B cell (primary cell): ENCODE measurements at regions of chr6 and their contacts with region 1.

Region 1: GRCh38 chr6:44221291-44221960 is 2.0 kb upstream of the SLC29A1 start:
- DNase-seq: peak; percentile 81
- ATAC-seq: peak; percentile 40
- H3K4me3 ChIP-seq: no peak overlapping the region
- H3K4me3 Mint-ChIP-seq: peak overlapping the region; percentile 58
- H3K27ac ChIP-seq: no peak overlapping the region
- H3K27ac Mint-ChIP-seq: peak overlapping the region; percentile 13
- H3K4me1 ChIP-seq: peaks cover 26 to 45% of the 10 kb centered on the region in 2 donors
- H3K4me1 Mint-ChIP-seq: peaks cover 41% of the 10 kb centered on the region
- H3K27me3 ChIP-seq: peaks cover 0 to 2% (median 0%) of the 10 kb centered on the region in 4 experiments
- H3K27me3 Mint-ChIP-seq: no peaks in the 10 kb centered on the region
- CTCF ChIP-seq: peak; percentile 80

Region 2: GRCh38 chr6:43865932-43866645 is 355.3 kb before region 1 on chr6:
- CTCF ChIA-PET with region 1: no interaction called
- POLR2A ChIA-PET with region 1: no interaction called
- intact Hi-C with region 1: no loop called
- DNase-seq: no peak
- ATAC-seq: no peak
- H3K4me3 ChIP-seq: no peak overlapping the region
- H3K4me3 Mint-ChIP-seq: no peak overlapping the region
- H3K27ac ChIP-seq: no peak overlapping the region
- H3K27ac Mint-ChIP-seq: no peak overlapping the region
- H3K4me1 ChIP-seq: no peaks in the 10 kb centered on the region
- H3K4me1 Mint-ChIP-seq: no peaks in the 10 kb centered on the region
- H3K27me3 ChIP-seq: peaks cover 0 to 13% (median 2%) of the 10 kb centered on the region in 4 experiments
- H3K27me3 Mint-ChIP-seq: peaks cover 29% of the 10 kb centered on the region
- CTCF ChIP-seq: no peak

Region 3: GRCh38 chr6:44172731-44173500 is 48.5 kb before region 1 on chr6:
- CTCF ChIA-PET with region 1: interaction called, 6 read pairs
- POLR2A ChIA-PET with region 1: interaction called, 4 read pairs
- intact Hi-C with region 1: loop called (anchors 5 kb)
- DNase-seq: peak; percentile 83
- ATAC-seq: peak; percentile 72
- H3K4me3 ChIP-seq: no peak overlapping the region
- H3K4me3 Mint-ChIP-seq: no peak overlapping the region
- H3K27ac ChIP-seq: no peak overlapping the region
- H3K27ac Mint-ChIP-seq: no peak overlapping the region
- H3K4me1 ChIP-seq: peaks cover 10 to 18% of the 10 kb centered on the region in 2 donors
- H3K4me1 Mint-ChIP-seq: peaks cover 14% of the 10 kb centered on the region
- H3K27me3 ChIP-seq: peaks cover 0 to 18% (median under 1%) of the 10 kb centered on the region in 4 experiments
- H3K27me3 Mint-ChIP-seq: peaks cover 17% of the 10 kb centered on the region
- CTCF ChIP-seq: peak; percentile 83

Region 4: GRCh38 chr6:44246663-44247337 is 25.4 kb after region 1 on chr6 and contains the start of gene HSP90AB1:
- CTCF ChIA-PET with region 1: interaction called, 10 read pairs
- POLR2A ChIA-PET with region 1: interaction called, 52 read pairs
- intact Hi-C with region 1: loop called (anchors 1 kb)
- DNase-seq: peak; percentile 99
- ATAC-seq: peak; percentile 74
- H3K4me3 ChIP-seq: peak within 1 kb of the TSS; percentile 85 to 100 (median 98)
- H3K4me3 Mint-ChIP-seq: peak within 1 kb of the TSS; percentile 96
- H3K27ac ChIP-seq: peak within 1 kb of the TSS; percentile 93 to 99
- H3K27ac Mint-ChIP-seq: peak within 1 kb of the TSS; percentile 95
- H3K4me1 ChIP-seq: peaks cover 12 to 30% of the 10 kb centered on the region in 2 donors
- H3K4me1 Mint-ChIP-seq: peaks cover 43% of the 10 kb centered on the region
- H3K27me3 ChIP-seq: no peaks in the 10 kb centered on the region
- H3K27me3 Mint-ChIP-seq: no peaks in the 10 kb centered on the region
- CTCF ChIP-seq: no peak
- total RNA-seq, gene HSP90AB1: 384 and 395 TPM in 2 replicates

Region 5: DNA sequence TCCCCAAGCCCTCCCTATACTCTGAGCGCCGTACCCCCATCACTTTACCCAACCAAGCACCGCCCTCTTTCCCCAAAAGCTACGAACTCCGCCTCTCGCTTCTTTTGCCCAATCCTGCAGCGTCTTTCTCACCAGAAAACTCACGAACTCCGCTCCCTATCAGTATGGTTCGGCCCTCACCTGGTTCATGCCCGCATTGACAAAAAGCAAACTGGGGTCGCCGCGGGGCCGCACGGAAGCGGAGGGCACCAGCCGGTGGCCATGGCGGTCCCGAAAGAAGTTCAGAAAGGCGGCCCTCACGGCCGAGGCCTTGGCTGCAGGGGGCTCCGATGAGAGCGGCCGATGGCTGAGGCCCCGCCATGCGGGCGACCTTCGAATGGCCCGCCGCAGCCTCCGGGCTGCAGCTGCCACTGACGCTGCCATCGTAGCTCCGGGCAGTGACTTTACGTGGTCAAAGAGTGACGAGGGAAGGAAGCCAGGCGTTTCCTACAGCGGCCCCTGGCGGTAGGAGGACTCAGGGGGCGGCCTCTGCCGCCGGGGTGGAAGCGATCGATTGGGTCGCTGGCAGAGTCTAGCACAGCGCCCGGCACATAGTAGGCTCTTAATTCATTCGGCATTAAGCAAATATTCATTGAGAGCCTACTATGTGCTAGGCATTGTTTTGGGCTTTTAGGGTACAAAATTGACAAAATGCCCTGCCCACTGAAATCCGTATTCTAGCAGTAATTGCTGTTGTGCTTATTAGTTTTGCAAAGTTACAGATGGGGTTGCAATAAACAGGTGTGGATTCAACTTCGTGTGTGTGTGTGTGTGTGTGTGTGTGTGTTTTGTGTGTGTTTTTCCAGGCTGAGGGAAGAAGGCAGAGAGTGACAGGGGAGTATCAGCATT is 91.7 kb after region 1 on chr6 and contains the start of gene AARS2:
- CTCF ChIA-PET with region 1: interaction called, 3 read pairs
- POLR2A ChIA-PET with region 1: no interaction called
- intact Hi-C with region 1: loop called (anchors 2 kb)
- DNase-seq: peak; percentile 93
- ATAC-seq: peak; percentile 97
- H3K4me3 ChIP-seq: peak within 1 kb of the TSS; percentile 76 to 94 (median 88)
- H3K4me3 Mint-ChIP-seq: peak within 1 kb of the TSS; percentile 94
- H3K27ac ChIP-seq: peak within 1 kb of the TSS; percentile 72 to 86
- H3K27ac Mint-ChIP-seq: peak within 1 kb of the TSS; percentile 92
- H3K4me1 ChIP-seq: peaks cover 7 to 9% of the 10 kb centered on the region in 2 donors
- H3K4me1 Mint-ChIP-seq: peaks cover 17% of the 10 kb centered on the region
- H3K27me3 ChIP-seq: peaks cover 0 to 4% (median under 1%) of the 10 kb centered on the region in 4 experiments
- H3K27me3 Mint-ChIP-seq: peaks cover 2% of the 10 kb centered on the region
- CTCF ChIP-seq: peak; percentile 97
- total RNA-seq, gene AARS2: 21.3 and 22.6 TPM in 2 replicates

Region 6: DNA sequence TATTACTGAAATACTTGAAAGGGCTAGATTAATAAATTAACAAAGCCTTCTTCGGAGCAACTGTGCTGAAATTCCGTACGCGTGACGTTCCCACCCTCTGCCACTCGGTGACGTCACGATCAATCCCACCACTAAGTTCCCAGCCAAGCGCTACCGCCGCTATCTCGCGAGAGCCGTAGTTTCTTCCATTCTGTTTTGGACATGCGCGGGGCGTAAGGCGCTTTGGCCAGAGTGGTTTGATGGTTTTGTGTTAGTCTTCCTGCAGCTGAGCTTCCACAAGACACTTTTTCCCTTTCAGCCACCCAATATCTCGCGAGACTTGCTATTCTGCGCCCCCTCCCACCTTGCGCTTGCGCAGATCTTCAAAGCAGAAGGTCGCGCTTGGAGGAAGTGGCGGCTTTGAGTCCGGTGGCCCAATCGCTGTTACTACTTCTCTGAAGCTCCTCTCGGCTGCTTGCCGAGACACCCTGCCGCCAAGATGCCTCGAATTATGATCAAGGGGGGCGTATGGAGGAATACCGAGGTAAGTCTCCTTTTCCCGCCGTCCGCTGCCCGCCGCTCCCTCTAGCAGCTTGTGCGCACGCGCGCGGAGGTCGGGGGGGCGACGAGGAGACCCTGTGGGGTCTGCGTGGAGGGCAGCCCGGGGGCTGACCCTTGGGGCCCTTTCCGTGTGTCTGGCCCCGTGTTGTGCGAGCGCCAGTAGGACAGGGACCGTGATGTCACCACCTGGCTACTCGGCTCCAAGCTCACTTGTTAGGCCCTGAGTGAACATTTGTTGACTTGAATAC is 166.1 kb after region 1 on chr6 and contains the start of gene CDC5L:
- CTCF ChIA-PET with region 1: no interaction called
- POLR2A ChIA-PET with region 1: interaction called, 5 read pairs
- intact Hi-C with region 1: loop called (anchors 5 kb)
- DNase-seq: peak; percentile 98
- ATAC-seq: peak; percentile 89
- H3K4me3 ChIP-seq: peak within 1 kb of the TSS; percentile 69 to 98 (median 93)
- H3K4me3 Mint-ChIP-seq: peak within 1 kb of the TSS; percentile 100
- H3K27ac ChIP-seq: peak within 1 kb of the TSS; percentile 83 to 93
- H3K27ac Mint-ChIP-seq: peak within 1 kb of the TSS; percentile 99
- H3K4me1 ChIP-seq: peaks cover 20 to 21% of the 10 kb centered on the region in 2 donors
- H3K4me1 Mint-ChIP-seq: peaks cover 38% of the 10 kb centered on the region
- H3K27me3 ChIP-seq: no peaks in the 10 kb centered on the region
- H3K27me3 Mint-ChIP-seq: no peaks in the 10 kb centered on the region
- CTCF ChIP-seq: no peak
- total RNA-seq, gene CDC5L: 22.2 and 22.5 TPM in 2 replicates